Common myeloid progenitor, CD34-positive (primary cell): ENCODE measurements at regions of chr4 and their contacts with region 1.

Region 1: DNA sequence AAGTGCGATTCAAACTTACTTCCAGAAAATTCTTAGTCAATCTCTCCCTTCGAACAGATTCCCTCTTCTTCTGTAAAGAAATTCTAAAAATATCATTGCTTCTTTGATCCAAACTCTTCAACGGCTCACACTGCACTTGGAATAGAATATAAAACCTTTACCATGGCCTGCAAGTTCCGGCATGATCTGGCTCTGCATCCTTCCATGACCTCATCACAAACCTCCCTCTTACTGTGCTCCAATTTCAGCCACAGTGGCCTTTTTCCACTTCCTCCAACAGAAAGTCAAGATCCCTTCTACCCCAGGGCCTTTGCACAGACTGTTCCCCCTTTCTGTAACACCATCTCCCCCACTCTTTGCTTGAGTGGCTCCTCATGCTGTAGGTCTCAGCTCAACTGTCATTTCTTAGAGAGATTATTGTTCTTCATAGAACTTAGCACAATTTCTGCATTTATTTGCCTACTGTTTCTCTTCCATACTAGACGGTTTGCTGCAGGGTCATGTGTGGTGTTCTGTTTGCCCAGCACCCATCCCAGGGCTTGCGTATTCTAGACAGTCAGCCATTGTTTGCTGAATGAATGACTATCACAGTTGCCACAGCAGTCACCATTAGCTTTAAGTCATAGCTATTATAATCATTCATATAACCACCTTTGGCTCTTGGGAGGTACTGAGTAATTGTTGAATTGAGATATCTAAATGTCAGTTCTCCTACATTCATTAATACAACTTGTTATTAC is 1.9 kb upstream of the STOX2 start:
- DNase-seq: no peak
- H3K4me3 ChIP-seq: no peak overlapping the region
- H3K27ac ChIP-seq: no peak overlapping the region
- H3K4me1 ChIP-seq: peaks cover 3 to 26% (median 23%) of the 10 kb centered on the region in 4 experiments
- H3K27me3 ChIP-seq: peaks cover 8 to 48% (median 28%) of the 10 kb centered on the region in 5 experiments

Region 2: GRCh38 chr4:183686461-183686860 is 216.7 kb before region 1 on chr4:
- CTCF ChIA-PET with region 1: no interaction called
- POLR2A ChIA-PET with region 1: interaction called, 11 read pairs
- DNase-seq: no peak
- H3K4me3 ChIP-seq: no peak overlapping the region
- H3K27ac ChIP-seq: no peak overlapping the region
- H3K4me1 ChIP-seq: no peaks in the 10 kb centered on the region
- H3K27me3 ChIP-seq: no peaks in the 10 kb centered on the region